Right ventricle myocardium inferior (tissue), 1 donor: ENCODE measurements at regions of chr13 and their contacts with region 1.

Region 1: DNA sequence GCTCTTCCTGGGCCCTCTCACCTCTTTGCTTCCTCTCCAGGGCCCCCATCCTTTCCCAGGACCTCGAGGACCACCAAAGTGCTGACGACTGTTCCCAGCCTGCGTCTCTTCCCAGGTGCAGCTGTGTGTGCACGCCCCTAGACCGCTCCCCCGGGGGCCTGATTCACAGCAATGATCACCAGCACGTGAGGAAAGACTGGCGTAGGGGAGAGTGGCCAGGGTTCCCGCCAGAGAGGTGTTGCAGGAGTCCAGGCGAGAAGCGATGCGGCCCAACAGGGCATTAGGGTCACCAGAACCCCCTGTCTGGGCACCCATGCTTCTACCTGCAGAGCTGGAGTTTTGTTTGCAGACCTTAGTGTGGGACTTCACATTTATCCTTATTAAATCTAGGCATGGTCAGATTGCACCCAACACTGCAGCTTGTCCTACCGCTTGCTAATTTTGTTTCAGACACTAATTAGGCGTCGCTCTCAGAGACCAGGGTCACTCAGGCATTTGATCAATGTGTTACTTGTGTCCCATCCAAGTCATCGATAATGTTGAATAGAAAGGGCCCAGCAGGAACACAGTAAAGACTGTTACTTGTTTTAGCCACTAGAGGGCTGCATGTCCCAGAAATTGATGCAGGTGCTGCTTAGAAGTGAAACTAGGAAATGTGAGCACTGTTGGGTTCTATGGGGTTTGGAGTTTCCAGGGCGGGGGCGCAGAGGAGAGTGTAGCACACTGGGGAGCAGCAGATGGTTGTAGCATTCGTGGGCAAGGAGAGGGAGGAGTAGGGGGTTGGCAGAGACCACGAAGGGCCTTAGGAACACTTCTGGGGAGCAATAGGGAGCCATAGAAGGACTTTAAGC is 53.2 kb downstream of the CDADC1 start:
- DNase-seq: no peak
- ATAC-seq: peak; percentile 73

Region 2: DNA sequence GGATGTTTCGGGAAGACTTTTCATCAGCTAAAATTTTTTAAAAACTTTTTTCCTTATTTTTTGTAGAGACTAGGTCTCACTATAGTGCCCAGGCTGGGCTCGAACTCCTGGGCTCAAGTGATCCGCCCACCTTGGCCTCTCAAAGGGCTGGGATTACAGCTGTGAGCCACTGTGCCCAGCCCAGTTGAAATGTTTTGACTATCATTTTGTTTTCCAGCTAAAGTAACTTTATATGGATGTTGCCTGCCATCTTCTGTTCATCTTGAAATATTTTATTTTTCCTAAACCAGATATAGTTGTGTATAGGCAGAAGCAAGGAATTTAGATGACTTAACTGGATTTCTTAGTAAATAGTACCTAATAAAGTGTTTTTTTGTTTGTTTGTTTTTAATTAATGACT is 135.9 kb after region 1 on chr13:
- intact Hi-C with region 1: loop called (anchors 2 kb)
- DNase-seq: no peak
- ATAC-seq: peak; percentile 87

Region 3: GRCh38 chr13:49517461-49517860 is 216.5 kb after region 1 on chr13:
- intact Hi-C with region 1: loop called (anchors 10 kb)
- DNase-seq: no peak
- ATAC-seq: peak; percentile 24

Region 4: DNA sequence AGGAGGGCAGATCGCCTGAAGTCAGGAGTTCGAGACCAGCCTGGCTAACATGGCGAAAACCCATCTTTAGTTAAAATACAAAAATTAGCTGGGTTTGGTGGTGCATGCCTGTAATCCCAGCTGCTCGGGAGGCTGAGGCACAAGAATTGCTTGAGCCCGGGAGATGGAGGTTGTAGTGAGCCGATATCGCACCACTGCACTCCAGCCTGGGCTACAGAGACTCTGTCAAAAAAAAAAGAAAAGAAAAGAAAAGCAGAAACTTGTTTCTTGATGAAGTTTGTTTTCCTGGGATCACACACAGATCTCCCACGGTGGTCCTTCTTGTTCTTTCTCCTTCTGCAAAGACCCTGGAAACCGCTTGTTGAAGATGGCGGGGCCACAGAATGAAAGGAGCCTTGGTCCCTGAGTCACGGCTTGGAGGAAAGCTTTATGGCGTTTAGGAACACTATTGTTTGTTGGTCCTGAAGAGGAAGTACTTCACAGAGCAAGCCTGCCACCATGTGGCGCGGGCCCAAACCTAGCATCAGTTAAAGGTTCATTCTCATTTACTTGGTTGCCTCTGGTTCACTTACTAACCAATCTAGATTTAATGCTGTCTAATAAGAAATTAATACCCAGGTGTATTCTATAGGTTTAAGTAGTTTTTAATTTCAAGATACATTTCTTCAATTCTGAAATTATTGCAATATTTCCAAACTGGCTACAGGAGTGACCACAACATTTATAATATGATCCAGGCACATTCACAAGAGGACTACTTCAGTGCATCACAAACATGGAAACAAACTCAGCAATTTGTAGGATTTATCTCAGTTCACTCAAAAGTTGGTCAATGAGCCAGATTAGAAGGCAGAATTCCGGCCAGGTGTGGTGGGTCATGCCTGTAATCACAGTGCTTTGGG is 306.0 kb after region 1 on chr13:
- intact Hi-C with region 1: loop called (anchors 1 kb)
- DNase-seq: peak; percentile 93
- ATAC-seq: peak; percentile 92

Region 5: GRCh38 chr13:49840266-49840665 is 539.3 kb after region 1 on chr13:
- intact Hi-C with region 1: loop called (anchors 10 kb)
- DNase-seq: no peak
- ATAC-seq: no peak